ENCODE measurements at regions of chr6 and their contacts with region 1.

Region 1: DNA sequence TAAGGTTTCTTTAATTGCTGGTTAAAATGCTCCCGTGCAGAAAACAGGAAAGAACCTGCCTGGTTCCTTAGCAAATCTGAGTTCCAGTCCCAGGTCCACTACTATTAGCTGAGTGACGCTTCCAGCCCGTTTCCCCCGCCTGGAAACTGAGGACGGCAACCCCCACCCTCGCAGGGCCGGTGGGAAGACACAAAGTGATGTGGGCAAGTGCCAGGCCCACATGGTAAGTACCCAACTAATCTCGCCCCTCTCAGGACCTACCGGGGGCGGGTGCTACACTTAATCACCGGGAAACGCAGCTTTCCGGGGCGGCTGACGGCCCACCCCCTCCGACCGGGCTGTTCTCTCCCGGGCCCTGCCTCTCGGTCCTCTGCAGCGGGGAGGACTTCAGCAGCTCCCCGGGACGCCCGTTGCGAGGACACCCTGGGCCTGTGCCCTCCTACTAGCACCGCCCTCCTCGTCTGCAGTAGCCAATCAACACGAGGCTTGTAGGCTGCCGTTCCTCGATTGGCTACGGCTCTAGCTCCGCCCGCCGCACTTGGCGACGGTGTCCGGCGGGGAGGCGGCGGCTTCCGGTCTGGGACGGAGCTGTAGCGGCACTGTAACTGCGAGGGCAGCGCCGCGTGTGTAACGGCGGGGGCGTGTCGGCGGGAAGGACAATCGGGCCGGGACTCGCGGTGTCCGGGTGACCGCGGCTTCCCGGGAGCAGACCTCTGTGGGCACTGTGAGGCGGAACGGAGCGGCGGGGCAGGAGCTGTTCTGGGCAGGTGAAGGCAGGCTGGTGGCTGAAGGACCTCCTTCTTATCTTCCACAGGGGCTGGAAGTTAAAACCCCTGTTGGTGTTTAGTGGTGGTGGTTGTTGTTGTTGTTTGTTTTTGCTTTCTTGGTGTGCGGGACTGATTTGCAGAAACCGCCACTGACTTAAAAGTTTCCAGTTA is at the start of gene ZBTB9:
- DNase-seq: peak; percentile 97
- ATAC-seq: peak; percentile 99
- H3K4me3 Mint-ChIP-seq: peak within 1 kb of the TSS; percentile 94
- H3K27ac Mint-ChIP-seq: peak within 1 kb of the TSS; percentile 88
- H3K4me1 Mint-ChIP-seq: peaks cover 29% of the 10 kb centered on the region
- H3K27me3 Mint-ChIP-seq: peaks cover 2% of the 10 kb centered on the region
- total RNA-seq, gene ZBTB9: 7.3 to 9.0 TPM

Region 2: GRCh38 chr6:33367009-33367714 is 87.1 kb before region 1 on chr6:
- CTCF ChIA-PET with region 1: no interaction called
- POLR2A ChIA-PET with region 1: no interaction called
- DNase-seq: no peak
- ATAC-seq: no peak
- H3K4me3 Mint-ChIP-seq: no peak overlapping the region
- H3K27ac Mint-ChIP-seq: no peak overlapping the region
- H3K4me1 Mint-ChIP-seq: peaks cover 4% of the 10 kb centered on the region
- H3K27me3 Mint-ChIP-seq: no peaks in the 10 kb centered on the region

Region 3: GRCh38 chr6:33430991-33431879 is 23.0 kb before region 1 on chr6:
- CTCF ChIA-PET with region 1: interaction called, 10 read pairs
- POLR2A ChIA-PET with region 1: interaction called, 14 read pairs
- DNase-seq: peak; percentile 93
- ATAC-seq: peak; percentile 67
- H3K4me3 Mint-ChIP-seq: peak overlapping the region; percentile 84
- H3K27ac Mint-ChIP-seq: peak overlapping the region; percentile 86
- H3K4me1 Mint-ChIP-seq: peaks cover 65% of the 10 kb centered on the region
- H3K27me3 Mint-ChIP-seq: no peaks in the 10 kb centered on the region

Measured in activated CD8-positive, alpha-beta T cell treated with anti-CD3 and anti-CD28 coated beads, Interleukin-2, amount 10 ng/mL, durations not matched to agents 7 days and 5 days (primary cell).